ENCODE measurements at regions of chr1 and their contacts with region 1.

Region 1: GRCh38 chr1:69589799-69590198 is 22.1 kb downstream of the LRRC7 start:
- H3K4me3 Mint-ChIP-seq: no peak overlapping the region
- H3K27ac Mint-ChIP-seq: no peak overlapping the region
- H3K4me1 Mint-ChIP-seq: no peaks in the 10 kb centered on the region
- H3K27me3 Mint-ChIP-seq: no peaks in the 10 kb centered on the region

Region 2: GRCh38 chr1:69639159-69639558 is 49.4 kb after region 1 on chr1:
- intact Hi-C with region 1: loop called (anchors 2 kb)
- H3K4me3 Mint-ChIP-seq: no peak overlapping the region
- H3K27ac Mint-ChIP-seq: no peak overlapping the region
- H3K4me1 Mint-ChIP-seq: no peaks in the 10 kb centered on the region
- H3K27me3 Mint-ChIP-seq: no peaks in the 10 kb centered on the region

Measured in dendritic cell treated with granulocyte-macrophage colony-stimulating factor and Interleukin-4, amounts not matched to agents 40 ng/mL and 50 ng/mL, for 4 days (primary cell).